ENCODE measurements at regions of chr6 and their contacts with region 1.

Region 1: DNA sequence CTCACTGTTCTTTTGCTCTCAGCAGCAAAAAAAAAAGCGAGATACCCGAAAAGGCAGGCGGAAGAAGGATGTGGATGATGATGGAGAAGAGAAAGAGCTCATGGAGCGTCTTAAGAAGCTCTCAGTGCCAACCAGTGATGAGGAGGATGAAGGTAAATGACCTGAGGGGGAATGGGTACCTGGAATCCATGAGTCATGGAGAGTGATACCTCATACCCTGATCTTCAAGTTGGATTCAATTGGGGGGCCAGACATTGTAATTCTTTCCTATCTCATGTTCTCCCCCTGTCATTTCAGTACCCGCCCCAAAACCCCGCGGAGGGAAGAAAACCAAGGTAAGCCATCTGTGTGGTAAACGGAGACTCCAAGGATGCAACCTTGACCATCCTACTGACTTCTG is 6.8 kb downstream of the ABCF1 start:
- DNase-seq: no peak
- H3K4me3 ChIP-seq: no peak overlapping the region
- H3K27ac ChIP-seq: no peak overlapping the region
- H3K4me1 ChIP-seq: no peaks in the 10 kb centered on the region
- H3K27me3 ChIP-seq: no peaks in the 10 kb centered on the region
- CTCF ChIP-seq: no peak
- EP300 ChIP-seq: no peak
- POLR2A ChIP-seq: no peak
- RAD21 ChIP-seq: no peak

Region 2: GRCh38 chr6:30493643-30494250 is 84.3 kb before region 1 on chr6:
- CTCF ChIA-PET with region 1: no interaction called
- POLR2A ChIA-PET with region 1: no interaction called
- DNase-seq: peak in 1 of 2 experiments; percentile 82
- H3K4me3 ChIP-seq: no peak overlapping the region
- H3K27ac ChIP-seq: no peak overlapping the region
- H3K4me1 ChIP-seq: peaks cover 0 to 5% (median 2%) of the 10 kb centered on the region in 4 experiments; a peak in 5 of 7 replicates
- H3K27me3 ChIP-seq: no peaks in the 10 kb centered on the region; a peak in 1 of 7 replicates
- CTCF ChIP-seq: peak; percentile 79 to 90 (median 85)
- EP300 ChIP-seq: no peak
- POLR2A ChIP-seq: peak in 1 of 2 experiments; percentile 23; a peak in 1 of 3 replicates
- RAD21 ChIP-seq: peak; percentile 35 to 52; a peak in 3 of 4 replicates

Region 3: DNA sequence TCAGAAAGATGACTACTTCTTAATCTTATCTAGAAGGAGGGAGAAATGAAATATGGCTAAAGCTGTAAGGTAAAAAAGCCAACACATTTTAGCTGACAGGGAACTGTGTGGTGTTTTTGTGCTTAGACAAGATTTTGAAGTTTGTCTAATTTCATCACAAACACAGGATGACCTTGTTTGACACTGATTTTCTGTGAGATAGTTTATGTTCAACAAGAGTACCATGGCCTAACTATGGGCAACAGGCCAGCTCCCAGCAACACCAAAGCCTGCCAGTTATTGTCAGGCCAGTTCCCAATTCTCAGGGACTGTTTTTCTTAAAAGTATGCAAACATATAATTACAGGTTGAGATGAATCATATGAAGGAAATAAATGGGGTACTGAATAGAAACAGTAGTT is 12.3 kb before region 1 on chr6:
- CTCF ChIA-PET with region 1: no interaction called
- POLR2A ChIA-PET with region 1: interaction called, 12 read pairs
- DNase-seq: no peak
- H3K4me3 ChIP-seq: no peak overlapping the region
- H3K27ac ChIP-seq: no peak overlapping the region
- H3K4me1 ChIP-seq: peaks cover 0 to 2% (median 0%) of the 10 kb centered on the region in 4 experiments; a peak in 3 of 7 replicates
- H3K27me3 ChIP-seq: no peaks in the 10 kb centered on the region
- CTCF ChIP-seq: no peak
- EP300 ChIP-seq: no peak
- POLR2A ChIP-seq: no peak
- RAD21 ChIP-seq: no peak

Measured in H1 (cell line).